ENCODE measurements at regions of chr16 and their contacts with region 1.

Region 1: GRCh38 chr16:15765880-15766279 is 90.9 kb downstream of the MYH11 start:
- DNase-seq: peak; percentile 53
- H3K4me3 Mint-ChIP-seq: no peak overlapping the region
- H3K27ac Mint-ChIP-seq: no peak overlapping the region
- H3K4me1 Mint-ChIP-seq: no peaks in the 10 kb centered on the region
- H3K27me3 Mint-ChIP-seq: peaks cover 5% of the 10 kb centered on the region

Region 2: GRCh38 chr16:15650019-15650697 is 115.7 kb before region 1 on chr16 and contains the start of gene NDE1:
- CTCF ChIA-PET with region 1: no interaction called
- intact Hi-C with region 1: no loop called
- DNase-seq: peak; percentile 92
- H3K4me3 Mint-ChIP-seq: peak within 1 kb of the TSS; percentile 100
- H3K27ac Mint-ChIP-seq: peak within 1 kb of the TSS; percentile 99
- H3K4me1 Mint-ChIP-seq: peaks cover 42% of the 10 kb centered on the region
- H3K27me3 Mint-ChIP-seq: no peaks in the 10 kb centered on the region
- total RNA-seq, gene NDE1: 150 to 161 TPM

Region 3: GRCh38 chr16:15822957-15823356 is 57.1 kb after region 1 on chr16:
- CTCF ChIA-PET with region 1: interaction called, 9 read pairs
- intact Hi-C with region 1: loop called (anchors 2 kb)
- DNase-seq: no peak
- H3K4me3 Mint-ChIP-seq: no peak overlapping the region
- H3K27ac Mint-ChIP-seq: no peak overlapping the region
- H3K4me1 Mint-ChIP-seq: no peaks in the 10 kb centered on the region
- H3K27me3 Mint-ChIP-seq: no peaks in the 10 kb centered on the region

Region 4: GRCh38 chr16:16191493-16192167 is 425.8 kb after region 1 on chr16:
- CTCF ChIA-PET with region 1: no interaction called
- intact Hi-C with region 1: loop called (anchors 2 kb)
- DNase-seq: no peak
- H3K4me3 Mint-ChIP-seq: no peak overlapping the region
- H3K27ac Mint-ChIP-seq: no peak overlapping the region
- H3K4me1 Mint-ChIP-seq: no peaks in the 10 kb centered on the region
- H3K27me3 Mint-ChIP-seq: peaks cover 2% of the 10 kb centered on the region

Measured in activated naive CD4-positive, alpha-beta T cell treated with anti-CD3 and anti-CD28 coated beads for 36 hours (primary cell).